OCI-LY7 (cell line): ENCODE measurements at regions of chr6 and their contacts with region 1.

Region 1: GRCh38 chr6:2952557-2953095 is 18.7 kb downstream of the SERPINB6 start:
- DNase-seq: peak; percentile 82
- H3K4me3 ChIP-seq: peak overlapping the region; percentile 48
- H3K27ac ChIP-seq: no peak overlapping the region
- H3K4me1 ChIP-seq: peaks cover 20% of the 10 kb centered on the region
- CTCF ChIP-seq: peak; percentile 100

Region 2: GRCh38 chr6:2460216-2460745 is 492.3 kb before region 1 on chr6:
- CTCF ChIA-PET with region 1: no interaction called
- POLR2A ChIA-PET with region 1: no interaction called
- intact Hi-C with region 1: no loop called
- DNase-seq: no peak
- H3K4me3 ChIP-seq: no peak overlapping the region
- H3K27ac ChIP-seq: no peak overlapping the region
- H3K4me1 ChIP-seq: no peaks in the 10 kb centered on the region
- CTCF ChIP-seq: no peak

Region 3: DNA sequence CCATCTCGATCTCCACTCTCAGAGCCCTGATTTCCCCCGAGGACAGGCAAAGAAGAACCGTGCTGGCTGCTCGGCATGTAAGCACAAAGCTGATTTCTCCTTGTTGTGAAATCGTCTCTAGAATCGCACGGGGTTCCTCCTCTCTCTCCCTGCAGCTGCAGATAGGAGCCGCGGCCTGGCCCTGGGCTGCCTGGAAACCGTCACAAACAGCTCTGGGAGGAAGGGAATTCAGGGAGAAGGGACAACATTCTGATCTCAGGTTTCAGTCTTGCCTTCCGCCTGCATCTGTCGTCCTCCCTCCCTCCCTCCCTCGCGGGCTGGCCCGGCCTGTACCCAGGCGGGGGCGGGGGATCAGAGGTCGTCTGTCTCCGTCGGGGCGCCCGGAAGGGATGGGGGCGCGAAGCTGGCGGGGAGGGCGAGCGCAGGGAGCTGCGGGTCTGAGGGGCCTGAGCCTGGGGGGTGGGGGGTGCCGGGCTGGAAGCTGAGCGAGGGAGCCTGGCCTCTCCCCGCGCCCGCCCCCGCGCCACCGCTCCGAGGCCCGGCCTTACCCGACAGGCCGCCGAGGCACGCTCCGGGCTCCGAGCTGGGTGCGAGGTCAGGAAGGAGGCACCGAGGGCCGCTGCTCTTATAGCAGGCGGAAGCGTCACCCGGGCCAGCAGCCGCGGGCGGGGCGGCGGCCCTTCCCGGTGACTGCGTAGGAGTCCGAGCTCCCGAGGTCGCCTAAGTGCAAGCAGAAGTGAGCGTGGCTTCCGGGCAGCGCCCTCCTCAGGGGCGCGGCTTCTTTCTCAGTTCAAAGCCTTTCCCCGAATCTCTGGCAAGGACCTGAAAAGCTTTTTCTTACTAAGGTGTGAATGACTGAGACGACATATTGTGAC is 111.1 kb before region 1 on chr6 and contains the start of gene SERPINB1:
- CTCF ChIA-PET with region 1: interaction called, 10 read pairs
- POLR2A ChIA-PET with region 1: interaction called, 5 read pairs
- intact Hi-C with region 1: no loop called
- DNase-seq: no peak
- H3K4me3 ChIP-seq: no peak within 1 kb of the TSS
- H3K27ac ChIP-seq: no peak within 1 kb of the TSS
- H3K4me1 ChIP-seq: peaks cover 16% of the 10 kb centered on the region
- CTCF ChIP-seq: no peak
- total RNA-seq, gene SERPINB1: 1.2 and 1.3 TPM in 2 replicates